Right ventricle myocardium inferior (tissue), 1 donor: ENCODE measurements at regions of chr1 and their contacts with region 1.

Region 1: GRCh38 chr1:156054500-156055280 is at the start of gene LAMTOR2:
- DNase-seq: peak; percentile 99
- ATAC-seq: peak; percentile 92
- total RNA-seq, gene LAMTOR2: 63.8 TPM

Region 2: GRCh38 chr1:155859234-155859829 is 195.4 kb before region 1 on chr1 and contains the start of gene SYT11:
- intact Hi-C with region 1: loop called (anchors 1 kb)
- DNase-seq: peak; percentile 96
- ATAC-seq: peak; percentile 91
- total RNA-seq, gene SYT11: 9.2 TPM

Region 3: GRCh38 chr1:155934097-155934935 is 120.4 kb before region 1 on chr1 and contains the start of gene KHDC4:
- intact Hi-C with region 1: loop called (anchors 5 kb)
- DNase-seq: peak; percentile 97
- ATAC-seq: peak; percentile 99
- total RNA-seq, gene KHDC4: 22.0 TPM

Region 4: GRCh38 chr1:156020292-156021089 is 34.2 kb before region 1 on chr1 and contains the start of gene SSR2:
- intact Hi-C with region 1: loop called (anchors 2 kb)
- DNase-seq: peak; percentile 90
- ATAC-seq: peak; percentile 98
- total RNA-seq, gene SSR2: 79.9 TPM